Head of caudate nucleus (tissue), 42 donors: ENCODE measurements at regions of chr6 and their contacts with region 1.

Region 1: GRCh38 chr6:53916804-53917463 is 122.1 kb downstream of the LRRC1 start:
- DNase-seq: peak in 22 of 42 donors; percentile 10 to 59 (median 36)

Region 2: GRCh38 chr6:53673162-53673683 is 243.7 kb before region 1 on chr6:
- intact Hi-C with region 1: no loop called
- DNase-seq: no peak

Region 3: DNA sequence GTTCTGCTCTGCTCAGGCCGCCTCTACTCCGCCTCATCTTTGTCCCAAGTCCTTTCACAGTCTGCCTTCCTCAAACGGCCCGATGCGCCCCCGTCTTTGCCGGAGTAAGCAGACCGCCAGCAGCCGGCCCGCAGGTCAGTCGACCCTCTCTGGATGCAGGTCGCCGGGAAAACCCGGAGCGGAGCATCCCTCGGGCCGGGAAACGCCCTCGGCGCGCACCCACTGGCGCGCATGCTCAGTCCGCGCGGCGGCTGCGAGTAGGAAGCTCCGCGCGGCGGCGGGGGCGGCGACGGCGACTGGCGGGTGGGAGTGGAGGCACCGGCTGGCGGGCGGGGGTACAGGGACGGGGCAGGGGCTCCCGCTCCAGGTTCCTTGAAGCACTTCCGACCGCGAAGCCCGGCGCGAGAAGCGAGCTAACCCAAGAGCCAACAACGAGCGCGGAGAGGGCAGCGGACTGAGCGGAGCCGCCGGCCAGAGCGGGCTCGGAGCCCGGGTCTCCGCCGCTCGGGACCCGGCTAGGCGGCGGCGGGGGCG is 122.1 kb before region 1 on chr6 and contains the start of gene LRRC1:
- intact Hi-C with region 1: loop called (anchors 10 kb)
- DNase-seq: peak; percentile 74 to 97 (median 93)

Region 4: GRCh38 chr6:53943395-53943794 is 26.5 kb after region 1 on chr6:
- intact Hi-C with region 1: no loop called
- DNase-seq: peak in 37 of 42 donors; percentile 6 to 79 (median 49)

Region 5: GRCh38 chr6:54118117-54118516 is 201.2 kb after region 1 on chr6:
- intact Hi-C with region 1: no loop called
- DNase-seq: no peak